CD4-positive, alpha-beta T cell (primary cell): ENCODE measurements at regions of chr4 and their contacts with region 1.

Region 1: GRCh38 chr4:89434364-89434988 is 126.9 kb upstream of the GPRIN3 start:
- DNase-seq: peak in 3 of 14 experiments; percentile 63 to 72 (median 71)
- ATAC-seq: peak; percentile 77
- H3K4me3 ChIP-seq: no peak overlapping the region
- H3K4me3 Mint-ChIP-seq: no peak overlapping the region
- H3K27ac ChIP-seq: no peak overlapping the region
- H3K27ac Mint-ChIP-seq: no peak overlapping the region
- H3K4me1 ChIP-seq: peaks cover 7% of the 10 kb centered on the region
- H3K4me1 Mint-ChIP-seq: peaks cover 12% of the 10 kb centered on the region
- H3K27me3 ChIP-seq: no peaks in the 10 kb centered on the region
- H3K27me3 Mint-ChIP-seq: no peaks in the 10 kb centered on the region
- CTCF ChIP-seq: peak; percentile 90

Region 2: DNA sequence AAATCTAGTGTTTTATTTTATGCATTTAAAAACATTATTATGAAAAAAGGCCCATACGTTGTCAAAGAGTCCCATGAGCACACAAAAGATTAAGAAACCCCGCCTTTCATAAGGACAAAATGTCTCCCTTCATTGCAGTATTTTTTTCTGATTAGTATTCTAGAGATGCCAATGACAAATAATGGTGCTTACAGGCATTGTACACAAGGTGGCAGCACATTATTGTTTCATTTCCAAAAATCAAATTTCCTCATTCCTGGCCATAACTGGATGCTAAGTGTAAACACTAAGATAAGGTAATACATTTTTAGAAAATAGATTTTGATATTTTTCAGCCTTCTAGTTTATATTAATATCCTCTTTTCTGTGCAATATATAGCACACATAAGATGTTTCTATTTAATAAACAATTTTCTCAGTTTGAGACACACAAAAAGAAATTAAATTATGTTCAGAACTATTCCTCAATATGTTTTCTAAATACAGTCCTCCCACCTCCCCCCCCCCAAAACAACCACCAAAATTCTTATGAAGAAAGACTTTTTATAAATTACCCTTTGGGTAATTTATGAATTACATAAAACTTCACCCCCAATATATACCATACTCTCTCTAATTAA is 275.5 kb before region 1 on chr4:
- CTCF ChIA-PET with region 1: no interaction called
- POLR2A ChIA-PET with region 1: no interaction called
- intact Hi-C with region 1: loop called (anchors 1 to 2 kb)
- DNase-seq: peak in 4 of 14 experiments; percentile 4 to 62 (median 46)
- ATAC-seq: peak; percentile 69
- H3K4me3 ChIP-seq: no peak overlapping the region
- H3K4me3 Mint-ChIP-seq: no peak overlapping the region
- H3K27ac ChIP-seq: no peak overlapping the region
- H3K27ac Mint-ChIP-seq: no peak overlapping the region
- H3K4me1 ChIP-seq: no peaks in the 10 kb centered on the region
- H3K4me1 Mint-ChIP-seq: no peaks in the 10 kb centered on the region
- H3K27me3 ChIP-seq: no peaks in the 10 kb centered on the region
- H3K27me3 Mint-ChIP-seq: peaks cover 3% of the 10 kb centered on the region
- CTCF ChIP-seq: peak; percentile 87

Region 3: DNA sequence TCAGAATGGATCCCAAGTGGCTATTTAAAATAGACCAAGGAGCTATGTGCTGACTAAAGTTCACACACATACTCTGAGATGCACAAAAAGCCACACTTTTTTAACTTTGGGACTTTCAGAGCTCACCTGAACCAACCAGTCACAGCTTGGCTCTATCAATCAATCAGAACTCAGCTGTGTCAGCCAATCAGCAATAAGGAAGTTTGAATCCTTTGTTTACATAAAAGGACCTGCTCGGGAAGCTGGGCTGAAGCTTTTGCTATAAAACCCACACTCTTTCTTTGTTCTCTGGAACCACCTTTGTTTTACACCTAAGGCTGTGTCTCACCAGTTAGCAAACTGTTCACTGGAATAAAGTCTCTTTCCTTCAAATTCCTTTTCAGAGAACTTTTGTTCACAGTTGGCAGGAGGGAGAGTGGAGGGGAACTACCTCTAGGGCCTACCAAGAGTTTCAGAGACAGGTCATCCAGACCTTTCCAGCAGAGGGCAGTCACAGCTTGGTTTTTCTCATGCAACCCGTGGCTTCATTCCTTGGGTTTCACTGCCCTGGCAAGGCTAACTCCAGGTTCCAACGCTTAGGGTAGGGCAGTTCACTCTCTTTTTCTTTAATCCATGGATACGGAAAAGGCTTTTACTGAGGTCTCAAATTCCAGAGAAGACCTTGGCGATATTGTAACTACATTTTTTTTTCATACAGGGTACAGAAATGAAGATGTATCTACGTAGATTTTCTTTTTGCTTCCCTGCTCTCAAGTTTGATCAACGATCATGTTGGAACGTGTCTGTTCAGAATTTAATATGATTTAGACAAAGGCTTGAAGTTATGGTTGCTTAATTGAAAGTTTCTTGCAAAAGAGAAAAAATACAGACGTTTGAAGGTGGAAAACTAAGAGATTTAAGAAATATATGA is 207.6 kb before region 1 on chr4:
- CTCF ChIA-PET with region 1: interaction called, 26 read pairs
- POLR2A ChIA-PET with region 1: no interaction called
- intact Hi-C with region 1: loop called (anchors 1 kb)
- DNase-seq: peak; percentile 62 to 88 (median 72)
- ATAC-seq: peak; percentile 94
- H3K4me3 ChIP-seq: no peak overlapping the region
- H3K4me3 Mint-ChIP-seq: peak overlapping the region; percentile 18
- H3K27ac ChIP-seq: no peak overlapping the region
- H3K27ac Mint-ChIP-seq: no peak overlapping the region
- H3K4me1 ChIP-seq: no peaks in the 10 kb centered on the region
- H3K4me1 Mint-ChIP-seq: peaks cover 5% of the 10 kb centered on the region
- H3K27me3 ChIP-seq: no peaks in the 10 kb centered on the region
- H3K27me3 Mint-ChIP-seq: no peaks in the 10 kb centered on the region
- CTCF ChIP-seq: peak; percentile 91

Region 4: DNA sequence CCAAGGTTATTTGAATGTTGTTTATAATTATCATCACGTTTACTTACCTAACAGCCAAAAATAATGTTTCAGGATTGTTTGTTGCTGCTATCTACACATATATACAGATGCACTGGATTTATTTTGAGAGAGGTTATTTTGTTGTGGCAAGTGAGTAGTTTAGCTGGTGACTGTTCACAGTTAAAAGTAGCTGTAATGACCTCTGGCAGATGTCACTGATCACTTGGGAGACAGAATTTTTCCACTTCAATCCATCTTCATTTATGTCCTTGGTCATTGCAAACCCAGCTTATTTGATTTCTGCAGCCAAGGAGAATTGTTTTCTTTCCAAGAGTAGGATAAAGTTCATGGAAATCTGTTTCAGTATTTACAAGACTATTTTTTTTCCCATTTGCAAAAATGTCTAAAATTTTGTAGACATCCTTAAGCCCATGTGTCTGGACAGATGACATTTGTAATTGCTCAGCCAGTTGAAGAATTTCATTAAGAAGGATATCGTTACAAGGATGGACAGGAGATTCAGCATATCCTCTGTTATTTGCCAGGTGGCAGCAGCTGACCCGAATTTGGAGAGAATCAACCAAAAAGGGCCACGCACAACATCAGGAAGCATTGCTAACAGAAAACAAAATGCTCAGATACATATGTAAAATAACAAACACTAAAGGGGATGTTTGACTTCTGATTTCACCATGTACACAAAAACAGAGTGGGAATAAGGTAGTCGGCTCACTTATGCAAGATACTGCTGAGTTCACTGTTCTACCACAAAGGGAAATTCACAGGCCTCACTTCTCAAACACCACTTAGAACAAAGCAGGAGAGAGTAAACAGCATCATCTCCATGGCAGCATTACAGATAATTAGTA is 191.4 kb before region 1 on chr4:
- CTCF ChIA-PET with region 1: no interaction called
- POLR2A ChIA-PET with region 1: no interaction called
- intact Hi-C with region 1: loop called in 1 of 2 experiments (anchors 5 kb)
- DNase-seq: peak in 3 of 14 experiments; percentile 19 to 88 (median 82)
- ATAC-seq: peak; percentile 92
- H3K4me3 ChIP-seq: no peak overlapping the region
- H3K4me3 Mint-ChIP-seq: peak overlapping the region; percentile 9
- H3K27ac ChIP-seq: peak overlapping the region in 1 of 2 donors; percentile 25
- H3K27ac Mint-ChIP-seq: peak overlapping the region; percentile 84
- H3K4me1 ChIP-seq: peaks cover 21% of the 10 kb centered on the region
- H3K4me1 Mint-ChIP-seq: peaks cover 70% of the 10 kb centered on the region
- H3K27me3 ChIP-seq: no peaks in the 10 kb centered on the region
- H3K27me3 Mint-ChIP-seq: no peaks in the 10 kb centered on the region
- CTCF ChIP-seq: no peak

Region 5: GRCh38 chr4:89254847-89255246 is 179.6 kb before region 1 on chr4:
- CTCF ChIA-PET with region 1: no interaction called
- POLR2A ChIA-PET with region 1: no interaction called
- intact Hi-C with region 1: loop called in 1 of 2 experiments (anchors 1 kb)
- DNase-seq: peak in 13 of 14 experiments; percentile 7 to 81 (median 33)
- ATAC-seq: peak; percentile 65
- H3K4me3 ChIP-seq: no peak overlapping the region
- H3K4me3 Mint-ChIP-seq: peak overlapping the region; percentile 1
- H3K27ac ChIP-seq: peak overlapping the region in 1 of 2 donors; percentile 38
- H3K27ac Mint-ChIP-seq: peak overlapping the region; percentile 47
- H3K4me1 ChIP-seq: peaks cover 38% of the 10 kb centered on the region
- H3K4me1 Mint-ChIP-seq: peaks cover 89% of the 10 kb centered on the region
- H3K27me3 ChIP-seq: no peaks in the 10 kb centered on the region
- H3K27me3 Mint-ChIP-seq: no peaks in the 10 kb centered on the region
- CTCF ChIP-seq: peak; percentile 88

Region 6: DNA sequence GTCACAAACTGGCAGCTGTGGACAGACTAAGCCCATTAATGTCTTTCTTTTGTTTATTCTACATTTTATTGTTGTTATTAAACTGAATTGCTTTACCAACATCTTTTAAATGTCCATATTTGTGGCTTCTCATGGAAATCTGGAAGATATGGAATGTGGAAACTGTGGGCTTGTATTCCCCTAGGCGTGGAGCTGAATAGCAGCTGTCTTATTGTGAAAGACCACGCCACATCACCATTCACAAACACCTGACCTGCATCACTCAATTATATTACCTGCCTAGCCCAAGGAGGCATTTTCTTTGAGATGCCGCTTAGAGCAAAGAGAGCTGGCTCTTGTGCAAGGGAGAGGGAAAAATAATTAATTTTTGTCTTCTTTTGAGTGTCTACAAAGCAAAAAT is 29.9 kb before region 1 on chr4:
- CTCF ChIA-PET with region 1: no interaction called
- POLR2A ChIA-PET with region 1: no interaction called
- intact Hi-C with region 1: no loop called
- DNase-seq: no peak
- ATAC-seq: no peak
- H3K4me3 ChIP-seq: no peak overlapping the region
- H3K4me3 Mint-ChIP-seq: no peak overlapping the region
- H3K27ac ChIP-seq: no peak overlapping the region
- H3K27ac Mint-ChIP-seq: no peak overlapping the region
- H3K4me1 ChIP-seq: no peaks in the 10 kb centered on the region
- H3K4me1 Mint-ChIP-seq: no peaks in the 10 kb centered on the region
- H3K27me3 ChIP-seq: no peaks in the 10 kb centered on the region
- H3K27me3 Mint-ChIP-seq: no peaks in the 10 kb centered on the region
- CTCF ChIP-seq: no peak